Gastrocnemius medialis (tissue), 4 donors: ENCODE measurements at regions of chr3 and their contacts with region 1.

Region 1: GRCh38 chr3:157201648-157202278 is 41.8 kb upstream of the CCNL1 start:
- DNase-seq: no peak
- ATAC-seq: peak in 1 of 2 donors; percentile 47
- H3K4me3 ChIP-seq: no peak overlapping the region
- H3K27ac ChIP-seq: no peak overlapping the region
- H3K4me1 ChIP-seq: peaks cover 0 to 4% of the 10 kb centered on the region in 2 donors
- H3K27me3 ChIP-seq: no peaks in the 10 kb centered on the region
- CTCF ChIP-seq: peak in 4 of 5 experiments; percentile 31 to 60 (median 44)
- POLR2A ChIP-seq: no peak

Region 2: DNA sequence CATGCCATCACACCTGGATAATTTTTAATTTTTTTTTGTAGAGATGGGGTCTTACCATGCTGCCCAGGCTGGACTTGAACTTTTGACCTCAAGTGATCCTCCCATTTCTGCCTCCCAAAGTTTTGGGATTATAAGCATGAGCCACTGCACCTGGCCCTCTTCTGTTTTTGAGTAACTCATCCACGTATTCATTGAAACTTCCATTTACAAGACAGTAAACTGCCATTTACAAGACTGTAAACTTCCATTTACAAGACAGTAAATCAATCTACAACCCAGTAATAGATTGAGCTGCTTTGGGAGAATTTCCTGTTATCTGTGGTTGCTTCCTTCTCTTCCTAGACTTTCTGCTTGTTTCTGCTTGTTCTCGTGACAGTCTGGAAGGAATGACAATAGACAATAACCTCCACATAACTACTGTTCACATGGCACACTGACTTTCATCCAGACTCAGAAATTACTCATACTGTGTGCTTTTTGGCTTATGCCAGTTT is 72.9 kb after region 1 on chr3:
- in situ Hi-C with region 1: no loop called
- intact Hi-C with region 1: no loop called
- DNase-seq: no peak
- ATAC-seq: no peak
- H3K4me3 ChIP-seq: no peak overlapping the region
- H3K27ac ChIP-seq: no peak overlapping the region
- H3K4me1 ChIP-seq: no peaks in the 10 kb centered on the region
- H3K27me3 ChIP-seq: no peaks in the 10 kb centered on the region
- CTCF ChIP-seq: no peak
- POLR2A ChIP-seq: no peak

Region 3: GRCh38 chr3:157493627-157494550 is 292.1 kb after region 1 on chr3:
- in situ Hi-C with region 1: loop called (anchors 5 to 10 kb)
- intact Hi-C with region 1: loop called (anchors 1 kb)
- DNase-seq: no peak
- ATAC-seq: no peak
- H3K4me3 ChIP-seq: no peak overlapping the region
- H3K27ac ChIP-seq: no peak overlapping the region
- H3K4me1 ChIP-seq: peaks cover 0 to 3% of the 10 kb centered on the region in 2 donors
- H3K27me3 ChIP-seq: no peaks in the 10 kb centered on the region
- CTCF ChIP-seq: peak in 4 of 5 experiments; percentile 38 to 56 (median 45)
- POLR2A ChIP-seq: no peak

Region 4: DNA sequence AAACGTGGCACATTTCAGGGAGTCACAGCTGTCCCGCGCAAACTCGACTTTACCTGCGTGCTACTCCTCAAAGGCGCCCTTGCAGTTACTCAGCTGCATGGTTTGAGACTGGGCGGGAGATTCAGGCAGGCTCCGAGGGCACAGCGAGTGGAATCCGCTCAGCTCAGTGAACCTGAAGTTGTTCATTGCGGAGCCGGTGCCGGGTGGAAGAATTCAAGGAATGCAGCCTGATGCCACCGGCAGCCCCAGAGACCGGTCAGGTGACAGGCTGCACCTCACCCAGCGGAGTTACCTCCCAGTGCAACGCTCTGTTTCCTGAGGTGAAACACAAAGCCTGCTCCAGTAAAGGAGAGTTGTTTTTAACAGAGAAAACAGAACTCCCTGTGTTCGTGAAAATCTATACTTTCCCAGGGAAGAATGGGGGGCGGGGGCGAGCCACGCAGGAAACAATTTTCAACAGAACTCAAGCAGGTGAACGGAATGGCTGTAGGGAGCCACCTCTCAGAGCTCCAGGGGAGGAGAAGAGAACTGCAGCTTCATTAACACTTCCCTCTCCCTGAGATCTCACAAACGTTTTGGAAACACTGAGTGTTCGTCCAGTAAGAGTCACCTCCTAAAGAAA is 297.7 kb after region 1 on chr3:
- in situ Hi-C with region 1: loop called (anchors 5 to 10 kb)
- intact Hi-C with region 1: no loop called
- DNase-seq: no peak
- ATAC-seq: no peak
- H3K4me3 ChIP-seq: peak overlapping the region; percentile 22 to 33 (median 30)
- H3K27ac ChIP-seq: no peak overlapping the region
- H3K4me1 ChIP-seq: peaks cover 0 to 8% of the 10 kb centered on the region in 2 donors
- H3K27me3 ChIP-seq: peaks cover 0 to 6% (median 0%) of the 10 kb centered on the region in 3 donors
- CTCF ChIP-seq: no peak
- POLR2A ChIP-seq: no peak